Natural killer cell (primary cell): ENCODE measurements at regions of chr2 and their contacts with region 1.

Region 1: GRCh38 chr2:124065636-124066035 is 40.5 kb downstream of the CNTNAP5 start:
- DNase-seq: no peak
- ATAC-seq: no peak
- H3K4me3 ChIP-seq: no peak overlapping the region
- H3K4me3 Mint-ChIP-seq: no peak overlapping the region
- H3K27ac ChIP-seq: no peak overlapping the region
- H3K27ac Mint-ChIP-seq: no peak overlapping the region
- H3K4me1 ChIP-seq: no peaks in the 10 kb centered on the region
- H3K4me1 Mint-ChIP-seq: no peaks in the 10 kb centered on the region
- H3K27me3 ChIP-seq: no peaks in the 10 kb centered on the region
- H3K27me3 Mint-ChIP-seq: no peaks in the 10 kb centered on the region
- CTCF ChIP-seq: no peak

Region 2: GRCh38 chr2:124039846-124040245 is 25.8 kb before region 1 on chr2:
- intact Hi-C with region 1: no loop called
- DNase-seq: no peak
- ATAC-seq: no peak
- H3K4me3 ChIP-seq: no peak overlapping the region
- H3K4me3 Mint-ChIP-seq: no peak overlapping the region
- H3K27ac ChIP-seq: no peak overlapping the region
- H3K27ac Mint-ChIP-seq: no peak overlapping the region
- H3K4me1 ChIP-seq: no peaks in the 10 kb centered on the region
- H3K4me1 Mint-ChIP-seq: no peaks in the 10 kb centered on the region
- H3K27me3 ChIP-seq: no peaks in the 10 kb centered on the region
- H3K27me3 Mint-ChIP-seq: no peaks in the 10 kb centered on the region
- CTCF ChIP-seq: no peak

Region 3: GRCh38 chr2:124053796-124054195 is 11.8 kb before region 1 on chr2:
- intact Hi-C with region 1: loop called (anchors 1 kb)
- DNase-seq: no peak
- ATAC-seq: no peak
- H3K4me3 ChIP-seq: no peak overlapping the region
- H3K4me3 Mint-ChIP-seq: no peak overlapping the region
- H3K27ac ChIP-seq: no peak overlapping the region
- H3K27ac Mint-ChIP-seq: no peak overlapping the region
- H3K4me1 ChIP-seq: no peaks in the 10 kb centered on the region
- H3K4me1 Mint-ChIP-seq: no peaks in the 10 kb centered on the region
- H3K27me3 ChIP-seq: no peaks in the 10 kb centered on the region
- H3K27me3 Mint-ChIP-seq: no peaks in the 10 kb centered on the region
- CTCF ChIP-seq: no peak